ENCODE measurements at regions of chr2 and their contacts with region 1.

Region 1: GRCh38 chr2:75466708-75467311 is 93.9 kb downstream of the EVA1A start:
- DNase-seq: peak; percentile 65
- ATAC-seq: no peak; the same call in 1 of the 2 replicates
- H3K4me3 ChIP-seq: no peak overlapping the region
- H3K27ac ChIP-seq: no peak overlapping the region
- H3K4me1 ChIP-seq: no peaks in the 10 kb centered on the region
- H3K27me3 ChIP-seq: no peaks in the 10 kb centered on the region
- CTCF ChIP-seq: peak; percentile 81

Region 2: DNA sequence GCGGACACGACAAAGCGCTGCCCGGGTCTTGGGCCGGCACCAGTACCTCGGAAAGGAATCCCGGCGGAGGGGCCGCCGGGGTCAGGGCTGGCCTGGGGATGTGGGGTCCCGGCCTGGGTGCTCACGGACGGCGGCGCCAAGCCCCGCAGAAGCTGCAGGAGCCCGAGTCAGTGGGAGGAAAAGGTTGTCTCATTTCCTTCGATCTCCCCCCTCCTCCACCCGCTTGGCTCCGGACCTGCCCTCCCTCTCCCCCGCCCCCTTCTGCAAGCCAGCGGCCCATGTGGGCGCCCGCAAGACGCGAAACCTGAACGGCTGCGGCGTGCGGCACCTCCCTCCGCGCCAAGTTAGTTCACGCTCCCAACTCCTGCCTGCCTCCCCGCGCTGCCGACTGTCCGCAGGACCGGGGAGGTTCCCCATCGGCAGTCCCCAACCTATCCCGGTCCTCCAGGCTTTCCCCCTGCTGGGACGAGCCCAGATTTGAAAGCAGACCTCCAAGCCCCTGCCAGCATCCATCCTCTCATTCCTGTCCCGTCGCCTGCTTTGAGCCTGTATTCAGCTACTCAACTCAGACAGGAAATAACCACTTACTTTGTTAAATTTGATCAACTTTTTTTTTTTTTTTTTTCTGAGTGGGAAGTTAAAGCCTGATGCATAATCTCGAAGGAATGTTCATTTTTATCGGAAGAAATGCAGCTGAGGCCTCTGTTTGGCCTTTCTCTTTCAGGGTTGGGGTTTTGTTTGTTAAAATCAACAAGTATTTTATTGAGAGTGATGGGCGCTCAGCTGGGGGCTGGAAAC is 94.2 kb after region 1 on chr2 and contains the start of gene EVA1A:
- CTCF ChIA-PET with region 1: interaction called, 4 read pairs
- POLR2A ChIA-PET with region 1: no interaction called
- intact Hi-C with region 1: loop called (anchors 2 kb)
- DNase-seq: peak; percentile 72
- ATAC-seq: peak; percentile 70
- H3K4me3 ChIP-seq: peak within 1 kb of the TSS; percentile 86
- H3K27ac ChIP-seq: peak within 1 kb of the TSS; percentile 48
- H3K4me1 ChIP-seq: peaks cover 25% of the 10 kb centered on the region
- H3K27me3 ChIP-seq: no peaks in the 10 kb centered on the region
- CTCF ChIP-seq: no peak
- total RNA-seq, gene EVA1A: 48.9 and 70.8 TPM in 2 replicates

Region 3: GRCh38 chr2:75627895-75628504 is 161.2 kb after region 1 on chr2:
- CTCF ChIA-PET with region 1: interaction called, 17 read pairs
- POLR2A ChIA-PET with region 1: no interaction called
- intact Hi-C with region 1: loop called (anchors 1 kb)
- DNase-seq: peak; percentile 90
- ATAC-seq: peak; percentile 96
- H3K4me3 ChIP-seq: no peak overlapping the region
- H3K27ac ChIP-seq: no peak overlapping the region
- H3K4me1 ChIP-seq: no peaks in the 10 kb centered on the region
- H3K27me3 ChIP-seq: no peaks in the 10 kb centered on the region
- CTCF ChIP-seq: peak; percentile 96

Region 4: GRCh38 chr2:75710577-75711253 is 243.9 kb after region 1 on chr2 and contains the start of gene GCFC2:
- CTCF ChIA-PET with region 1: no interaction called
- POLR2A ChIA-PET with region 1: no interaction called
- intact Hi-C with region 1: loop called (anchors 10 kb)
- DNase-seq: peak; percentile 88
- ATAC-seq: peak; percentile 86
- H3K4me3 ChIP-seq: peak within 1 kb of the TSS; percentile 86
- H3K27ac ChIP-seq: peak within 1 kb of the TSS; percentile 67
- H3K4me1 ChIP-seq: peaks cover 25% of the 10 kb centered on the region
- H3K27me3 ChIP-seq: no peaks in the 10 kb centered on the region
- CTCF ChIP-seq: peak; percentile 35; the same call in 1 of the 2 replicates
- total RNA-seq, gene GCFC2: 24.5 and 31.1 TPM in 2 replicates

Measured in PC-3 (cell line).